ENCODE measurements at regions of chr17 and their contacts with region 1.

Region 1: GRCh38 chr17:5191541-5192417 is at the start of gene ZNF594:
- DNase-seq: peak; percentile 95 to 97 (median 96)
- H3K4me3 ChIP-seq: peak within 1 kb of the TSS; percentile 69 to 92
- H3K4me3 Mint-ChIP-seq: peak within 1 kb of the TSS; percentile 92 to 97 (median 94)
- H3K27ac ChIP-seq: peak within 1 kb of the TSS; percentile 68
- H3K27ac Mint-ChIP-seq: peak within 1 kb of the TSS; percentile 90 to 97 (median 93)
- H3K4me1 ChIP-seq: peaks cover 23% of the 10 kb centered on the region
- H3K4me1 Mint-ChIP-seq: peaks cover 17 to 35% (median 25%) of the 10 kb centered on the region in 4 donors
- H3K27me3 ChIP-seq: no peaks in the 10 kb centered on the region
- H3K27me3 Mint-ChIP-seq: no peaks in the 10 kb centered on the region
- total RNA-seq, gene ZNF594: 28.9 to 30.7 TPM

Region 2: DNA sequence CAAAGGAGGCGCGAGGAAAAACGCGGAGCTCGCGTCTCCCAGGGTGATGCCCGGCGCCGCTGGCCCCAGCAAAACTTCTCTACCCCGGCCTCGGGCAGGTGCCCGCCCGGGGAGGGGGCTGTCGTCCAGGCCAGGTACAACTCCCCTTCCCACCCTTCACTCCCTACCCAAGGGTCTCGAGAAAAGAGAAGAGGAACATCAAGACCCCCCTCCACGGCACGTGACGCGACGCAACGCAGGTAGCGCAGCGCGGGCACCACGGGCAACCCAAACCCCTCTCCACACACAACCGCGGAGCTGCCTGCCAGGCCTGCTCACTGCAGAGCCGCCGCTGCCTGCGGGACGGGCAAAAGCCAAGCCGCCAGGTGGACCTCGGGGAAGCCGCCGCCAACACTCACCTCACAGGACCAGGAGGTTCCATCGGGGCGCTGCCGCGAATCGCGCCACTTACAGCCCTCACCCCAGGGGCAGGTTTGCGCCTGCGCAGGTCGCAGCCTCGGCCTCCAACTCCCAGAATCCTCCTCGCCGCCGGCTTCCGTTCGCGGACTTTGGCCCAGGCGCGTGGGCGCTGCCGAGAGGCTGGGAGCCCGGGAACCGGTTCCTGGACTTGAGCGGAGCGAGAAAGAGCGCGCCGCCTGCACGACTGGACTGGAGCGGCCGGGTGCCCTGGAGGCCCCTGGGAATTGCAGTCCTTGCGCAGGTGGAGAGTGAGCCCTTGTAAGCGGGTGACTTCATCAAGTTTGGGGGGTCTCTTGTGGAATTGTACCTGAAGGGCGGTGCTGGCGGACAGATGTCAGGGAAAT is 80.2 kb before region 1 on chr17 and contains the start of gene ZNF232:
- CTCF ChIA-PET with region 1: no interaction called
- POLR2A ChIA-PET with region 1: no interaction called
- intact Hi-C with region 1: loop called (anchors 5 kb)
- DNase-seq: peak; percentile 85 to 89 (median 88)
- H3K4me3 ChIP-seq: peak within 1 kb of the TSS; percentile 89 to 94
- H3K4me3 Mint-ChIP-seq: peak within 1 kb of the TSS; percentile 83 to 92 (median 91)
- H3K27ac ChIP-seq: peak within 1 kb of the TSS; percentile 57
- H3K27ac Mint-ChIP-seq: peak within 1 kb of the TSS; percentile 18 to 94 (median 75)
- H3K4me1 ChIP-seq: peaks cover 13% of the 10 kb centered on the region
- H3K4me1 Mint-ChIP-seq: peaks cover 11 to 34% (median 22%) of the 10 kb centered on the region in 4 donors
- H3K27me3 ChIP-seq: peaks cover 4% of the 10 kb centered on the region
- H3K27me3 Mint-ChIP-seq: peaks cover 8 to 14% of the 10 kb centered on the region in 2 donors
- total RNA-seq, gene ZNF232: 18.7 to 19.7 TPM

Region 3: DNA sequence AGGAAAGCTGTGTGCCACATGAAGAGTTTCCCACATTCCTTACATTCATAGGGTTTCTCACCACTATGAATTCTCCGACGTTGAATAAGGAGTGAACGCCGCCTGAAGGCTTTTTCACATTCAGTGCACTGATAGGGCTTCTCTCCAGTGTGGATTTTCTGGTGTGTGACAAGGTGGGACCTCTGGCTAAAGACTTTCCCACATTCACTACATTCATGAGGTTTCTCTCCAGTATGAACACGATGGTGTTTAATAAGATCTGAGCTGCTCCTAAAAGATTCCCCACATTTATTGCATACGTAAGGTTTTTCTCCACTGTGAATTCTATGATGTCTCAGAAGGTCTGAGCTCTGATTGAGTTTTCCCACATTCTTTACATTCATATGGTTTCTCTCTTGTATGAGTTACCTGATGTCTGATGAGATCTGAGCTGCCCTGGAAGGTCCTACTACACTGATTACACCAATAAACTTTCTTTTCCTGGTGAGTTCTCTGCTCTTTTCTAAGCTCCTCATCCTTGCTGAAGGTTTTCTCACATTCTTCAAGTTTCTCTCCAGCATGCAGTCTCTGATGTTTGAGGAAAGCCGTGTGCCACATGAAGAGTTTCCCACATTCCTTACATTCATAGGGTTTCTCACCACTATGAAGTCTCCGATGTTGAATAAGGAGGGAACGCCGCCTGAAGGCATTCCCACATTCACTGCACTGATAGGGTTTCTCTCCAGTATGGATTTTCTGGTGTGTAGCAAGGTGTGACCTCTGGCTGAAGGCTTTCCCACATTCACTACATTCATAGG is 10.1 kb before region 1 on chr17:
- CTCF ChIA-PET with region 1: no interaction called
- POLR2A ChIA-PET with region 1: interaction called, 15 read pairs
- intact Hi-C with region 1: no loop called
- DNase-seq: no peak
- H3K4me3 ChIP-seq: no peak overlapping the region
- H3K4me3 Mint-ChIP-seq: peak overlapping the region in 3 of 8 donors; percentile 15 to 57 (median 22)
- H3K27ac ChIP-seq: no peak overlapping the region
- H3K27ac Mint-ChIP-seq: peak overlapping the region in 2 of 7 donors; percentile 29 to 61
- H3K4me1 ChIP-seq: no peaks in the 10 kb centered on the region
- H3K4me1 Mint-ChIP-seq: peaks cover 0 to 5% (median 0%) of the 10 kb centered on the region in 4 donors
- H3K27me3 ChIP-seq: no peaks in the 10 kb centered on the region
- H3K27me3 Mint-ChIP-seq: no peaks in the 10 kb centered on the region

Region 4: DNA sequence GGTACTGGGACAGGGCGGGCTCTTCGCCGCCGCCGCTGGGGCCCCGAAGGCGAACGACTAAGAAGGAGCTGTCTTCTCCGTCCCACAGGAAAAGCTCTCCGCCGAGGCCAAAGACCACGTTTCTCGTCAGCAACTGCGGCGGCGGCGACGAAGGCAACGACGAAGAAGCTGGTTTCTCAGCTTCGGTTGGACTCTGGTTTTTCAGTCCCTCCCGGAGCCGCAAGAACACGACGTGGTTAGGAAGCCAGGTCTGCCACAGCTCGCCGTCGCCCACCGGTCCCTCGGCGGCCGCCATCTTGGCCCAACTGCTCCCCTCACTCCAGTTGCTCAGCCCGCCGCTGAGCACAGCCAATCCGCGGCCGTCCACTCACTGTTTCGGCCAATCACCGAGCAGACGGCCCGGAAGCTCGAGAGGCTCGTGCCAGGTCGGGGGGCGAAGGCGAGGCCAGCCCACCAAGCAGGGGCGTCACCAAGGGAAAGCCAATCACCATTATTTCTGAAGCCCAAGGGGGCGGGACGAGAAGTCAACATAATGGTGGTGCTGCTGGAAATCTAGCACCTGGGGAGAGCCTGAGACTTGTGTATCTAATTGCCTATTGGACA is 227.7 kb after region 1 on chr17 and contains the start of gene NUP88:
- CTCF ChIA-PET with region 1: no interaction called
- POLR2A ChIA-PET with region 1: interaction called, 6 read pairs
- intact Hi-C with region 1: loop called (anchors 1 kb)
- DNase-seq: peak; percentile 92 to 97 (median 95)
- H3K4me3 ChIP-seq: peak within 1 kb of the TSS; percentile 82 to 99
- H3K4me3 Mint-ChIP-seq: peak within 1 kb of the TSS; percentile 97 to 99 (median 99)
- H3K27ac ChIP-seq: peak within 1 kb of the TSS; percentile 96
- H3K27ac Mint-ChIP-seq: peak within 1 kb of the TSS; percentile 97 to 100 (median 99)
- H3K4me1 ChIP-seq: peaks cover 48% of the 10 kb centered on the region
- H3K4me1 Mint-ChIP-seq: peaks cover 20 to 64% (median 40%) of the 10 kb centered on the region in 4 donors
- H3K27me3 ChIP-seq: no peaks in the 10 kb centered on the region
- H3K27me3 Mint-ChIP-seq: peaks cover 0 to 1% of the 10 kb centered on the region in 2 donors
- total RNA-seq, gene NUP88: 91.0 to 92.5 TPM